CD14-positive monocyte (primary cell): ENCODE measurements at regions of chr2 and their contacts with region 1.

Region 1: GRCh38 chr2:121185571-121186074 is 99.4 kb downstream of the TFCP2L1 start:
- DNase-seq: no peak
- H3K4me3 ChIP-seq: no peak overlapping the region
- H3K4me3 Mint-ChIP-seq: no peak overlapping the region
- H3K27ac ChIP-seq: no peak overlapping the region
- H3K27ac Mint-ChIP-seq: peak overlapping the region in 1 of 7 donors; percentile 57
- H3K4me1 ChIP-seq: peaks cover 26 to 33% of the 10 kb centered on the region in 2 donors
- H3K4me1 Mint-ChIP-seq: peaks cover 35% of the 10 kb centered on the region
- H3K27me3 ChIP-seq: no peaks in the 10 kb centered on the region
- H3K27me3 Mint-ChIP-seq: peaks cover 0 to 2% (median 0%) of the 10 kb centered on the region in 3 donors
- CTCF ChIP-seq: no peak

Region 2: DNA sequence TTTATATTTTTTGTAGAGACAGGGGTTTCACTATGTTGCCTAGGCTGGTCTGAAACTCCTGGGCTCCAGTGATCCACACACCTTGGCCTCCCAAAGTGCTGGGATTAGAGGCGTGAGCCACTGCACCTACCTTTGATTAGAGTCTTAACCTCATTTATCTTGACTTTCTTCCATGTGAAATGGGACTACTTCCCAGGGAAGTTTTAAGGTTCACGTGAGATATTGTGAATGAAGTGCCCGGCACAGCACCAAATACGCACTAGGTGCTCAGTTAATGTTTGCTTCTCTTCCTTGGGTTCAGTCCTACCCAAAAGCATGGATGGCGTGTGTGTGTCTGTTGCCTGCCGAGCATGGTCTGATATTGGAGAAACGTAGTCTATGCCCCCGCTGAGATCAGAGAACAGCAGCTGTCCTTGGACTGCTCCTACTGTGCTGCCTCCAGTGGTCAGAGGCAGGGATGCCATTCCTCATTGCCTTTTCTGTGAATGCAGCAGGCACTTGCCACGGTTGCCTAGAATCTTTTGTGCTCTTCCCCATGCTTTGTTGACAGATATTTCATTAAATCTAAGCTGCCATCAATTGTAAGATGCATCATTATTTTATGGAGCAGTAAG is 111.7 kb after region 1 on chr2:
- intact Hi-C with region 1: loop called in 1 of 2 experiments (anchors 10 kb)
- DNase-seq: peak in 1 of 3 donors; percentile 18
- H3K4me3 ChIP-seq: no peak overlapping the region
- H3K4me3 Mint-ChIP-seq: no peak overlapping the region
- H3K27ac ChIP-seq: no peak overlapping the region
- H3K27ac Mint-ChIP-seq: no peak overlapping the region
- H3K4me1 ChIP-seq: no peaks in the 10 kb centered on the region
- H3K4me1 Mint-ChIP-seq: peaks cover 10% of the 10 kb centered on the region
- H3K27me3 ChIP-seq: no peaks in the 10 kb centered on the region
- H3K27me3 Mint-ChIP-seq: peaks cover 4 to 9% (median 6%) of the 10 kb centered on the region in 3 donors
- CTCF ChIP-seq: peak; percentile 71

Region 3: DNA sequence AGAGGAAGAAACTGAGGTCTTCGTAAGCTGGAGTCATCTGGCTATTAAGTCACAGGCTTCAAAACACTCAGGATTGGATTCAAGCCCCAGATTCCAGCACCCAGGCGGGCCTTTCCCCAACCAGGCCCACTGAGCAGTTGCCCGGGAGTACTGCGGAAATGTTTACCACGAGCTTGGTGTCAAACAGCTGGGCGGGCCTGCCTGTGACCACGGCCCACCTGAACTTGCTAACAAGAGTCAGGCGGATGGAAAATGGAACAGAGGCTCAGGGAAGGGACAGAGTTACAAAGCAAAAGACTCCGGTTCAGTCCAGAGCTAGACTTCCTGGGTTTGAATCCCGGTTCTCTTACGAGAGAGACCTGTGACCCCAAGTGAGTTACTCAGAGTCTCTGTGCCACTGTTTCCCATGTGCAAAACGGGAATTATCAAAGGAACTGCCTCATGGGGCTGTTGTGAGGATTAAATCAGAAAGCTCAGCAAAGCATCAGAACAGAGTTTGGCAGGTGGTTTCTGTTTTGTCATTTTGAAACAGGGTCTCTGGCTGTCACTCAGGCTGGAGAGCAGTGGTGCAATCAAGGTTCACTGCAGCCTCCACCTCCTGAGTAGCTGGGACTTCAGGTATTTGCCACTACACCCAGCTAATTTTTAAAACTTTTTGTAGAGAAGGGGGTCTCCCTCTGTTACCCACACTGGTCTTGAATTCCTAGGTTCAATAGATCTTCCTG is 148.4 kb after region 1 on chr2:
- intact Hi-C with region 1: no loop called
- DNase-seq: no peak
- H3K4me3 ChIP-seq: no peak overlapping the region
- H3K4me3 Mint-ChIP-seq: no peak overlapping the region
- H3K27ac ChIP-seq: no peak overlapping the region
- H3K27ac Mint-ChIP-seq: peak overlapping the region in 1 of 7 donors; percentile 68
- H3K4me1 ChIP-seq: no peaks in the 10 kb centered on the region
- H3K4me1 Mint-ChIP-seq: no peaks in the 10 kb centered on the region
- H3K27me3 ChIP-seq: no peaks in the 10 kb centered on the region
- H3K27me3 Mint-ChIP-seq: peaks cover 2 to 9% (median 4%) of the 10 kb centered on the region in 3 donors
- CTCF ChIP-seq: no peak